PC-3 (cell line): ENCODE measurements at regions of chr1 and their contacts with region 1.

Region 1: DNA sequence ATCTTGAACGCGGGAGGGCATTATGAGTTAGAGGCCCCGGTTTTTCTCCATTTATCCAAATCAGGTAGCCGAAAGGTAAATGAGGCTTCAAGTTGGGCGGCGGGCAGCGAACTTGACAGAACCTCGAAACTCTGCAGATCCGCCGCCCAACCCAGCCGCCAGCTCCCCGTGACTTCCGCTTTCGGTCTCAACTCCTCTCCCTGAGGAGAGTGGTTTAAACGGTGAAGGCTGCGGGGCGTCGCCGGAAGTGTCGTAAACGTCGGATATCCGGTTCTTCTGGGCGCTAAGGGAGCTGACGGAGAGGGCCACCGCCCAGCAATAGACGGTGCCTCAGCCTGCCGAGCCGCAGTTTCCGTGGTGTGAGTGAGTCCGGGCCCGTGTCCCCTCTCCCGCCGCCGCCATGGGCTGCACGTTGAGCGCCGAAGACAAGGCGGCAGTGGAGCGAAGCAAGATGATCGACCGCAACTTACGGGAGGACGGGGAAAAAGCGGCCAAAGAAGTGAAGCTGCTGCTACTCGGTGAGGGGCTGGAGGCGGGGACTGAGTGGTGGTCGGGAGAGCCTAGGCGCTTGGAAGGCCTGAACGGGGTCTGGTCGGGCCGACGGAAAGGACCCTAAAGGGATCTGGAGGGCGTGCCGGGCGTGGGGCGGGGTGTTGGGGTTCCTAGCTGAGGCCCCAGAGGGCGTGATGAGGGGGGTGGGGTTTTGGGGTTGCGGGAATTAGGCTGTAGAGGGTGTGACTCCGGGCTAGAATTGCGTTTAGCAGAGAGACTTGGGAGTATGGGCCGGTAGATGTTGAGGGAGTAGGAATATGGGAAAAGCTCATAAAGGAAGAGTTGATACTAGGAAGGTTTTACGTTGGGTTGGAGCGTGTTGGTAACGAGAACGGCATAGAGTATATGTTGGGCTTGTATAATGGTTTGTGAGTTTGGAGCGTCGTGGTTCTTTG is at the start of gene GNAI3:
- DNase-seq: peak; percentile 97
- ATAC-seq: peak; percentile 92
- H3K4me3 ChIP-seq: peak within 1 kb of the TSS; percentile 93
- H3K27ac ChIP-seq: peak within 1 kb of the TSS; percentile 62
- H3K4me1 ChIP-seq: peaks cover 26% of the 10 kb centered on the region
- H3K27me3 ChIP-seq: no peaks in the 10 kb centered on the region
- CTCF ChIP-seq: no peak
- total RNA-seq, gene GNAI3: 6.7 and 6.8 TPM in 2 replicates

Region 2: DNA sequence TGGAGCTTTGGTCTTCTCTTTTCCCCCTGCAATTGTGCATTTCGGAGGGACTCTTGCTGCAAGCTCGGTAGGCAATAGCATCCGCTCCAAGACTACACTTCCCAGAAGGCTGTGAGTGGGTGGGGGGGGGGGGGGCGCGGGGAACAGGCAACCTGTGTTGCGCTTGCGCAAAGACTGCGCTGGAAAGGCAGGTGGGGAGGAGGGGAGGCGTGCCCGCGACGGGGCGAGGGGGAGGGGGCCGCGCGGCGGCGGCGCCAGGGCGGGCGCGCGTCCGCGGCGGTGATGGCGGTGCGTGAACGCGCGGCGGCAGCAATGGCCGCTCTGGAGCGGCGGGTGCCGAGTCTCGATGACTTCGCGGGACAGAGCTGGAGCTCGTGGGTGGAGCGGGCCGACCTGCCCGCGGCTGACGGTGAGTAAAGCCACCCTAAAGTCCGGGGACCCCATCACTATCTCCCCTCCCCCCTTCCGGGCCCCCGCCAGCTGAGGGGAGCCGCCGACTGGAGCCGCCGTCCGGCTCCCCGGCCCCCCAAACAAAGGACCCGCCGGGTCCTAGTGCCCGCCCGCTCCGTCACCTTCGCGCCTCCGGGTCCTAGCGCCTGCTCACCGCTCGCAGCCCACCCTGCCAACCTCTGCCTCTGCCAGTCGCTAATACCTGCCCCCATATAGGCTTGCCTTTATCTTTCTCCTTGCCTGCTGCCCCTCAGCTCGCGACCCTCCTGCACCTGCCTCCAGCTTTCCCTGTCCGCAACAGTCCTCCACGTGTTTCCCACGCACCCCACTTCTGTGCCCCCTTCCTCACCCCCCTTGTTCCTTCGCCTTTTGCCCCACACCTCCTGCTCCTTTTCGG is 64.7 kb before region 1 on chr1 and contains the start of gene ATXN7L2:
- CTCF ChIA-PET with region 1: no interaction called
- POLR2A ChIA-PET with region 1: no interaction called
- intact Hi-C with region 1: no loop called
- DNase-seq: peak; percentile 86
- ATAC-seq: peak; percentile 80
- H3K4me3 ChIP-seq: peak within 1 kb of the TSS; percentile 91
- H3K27ac ChIP-seq: peak within 1 kb of the TSS; percentile 51
- H3K4me1 ChIP-seq: peaks cover 17% of the 10 kb centered on the region
- H3K27me3 ChIP-seq: peaks cover 12% of the 10 kb centered on the region
- CTCF ChIP-seq: no peak
- total RNA-seq, gene ATXN7L2: 9.2 and 9.4 TPM in 2 replicates

Region 3: GRCh38 chr1:109567877-109568672 is 19.5 kb after region 1 on chr1:
- CTCF ChIA-PET with region 1: interaction called, 3 read pairs
- POLR2A ChIA-PET with region 1: interaction called, 6 read pairs
- intact Hi-C with region 1: loop called (anchors 2 kb)
- DNase-seq: no peak
- ATAC-seq: no peak
- H3K4me3 ChIP-seq: no peak overlapping the region
- H3K27ac ChIP-seq: no peak overlapping the region
- H3K4me1 ChIP-seq: peaks cover 30% of the 10 kb centered on the region
- H3K27me3 ChIP-seq: no peaks in the 10 kb centered on the region
- CTCF ChIP-seq: no peak

Region 4: DNA sequence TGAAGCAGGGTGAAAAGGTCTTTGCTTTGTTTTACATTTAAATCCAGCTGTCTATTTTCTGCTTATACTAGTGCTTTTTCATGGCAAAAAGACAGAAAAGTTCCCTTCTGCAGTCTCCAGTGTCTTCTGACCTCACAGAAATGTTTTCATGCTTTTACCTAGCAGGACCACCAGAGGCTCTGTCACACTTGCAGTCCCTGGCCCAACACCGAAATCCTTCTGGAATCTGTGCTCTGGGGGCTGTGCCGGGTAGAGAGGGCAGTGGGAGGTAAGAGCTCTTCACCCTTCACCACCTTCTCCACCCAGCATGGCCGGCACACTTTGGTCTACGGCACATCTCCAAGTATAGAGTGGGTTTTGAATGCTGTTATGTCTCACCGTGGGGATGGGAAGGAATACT is 50.1 kb after region 1 on chr1:
- CTCF ChIA-PET with region 1: no interaction called
- POLR2A ChIA-PET with region 1: no interaction called
- intact Hi-C with region 1: no loop called
- DNase-seq: no peak
- ATAC-seq: peak; percentile 20; the same call in 1 of the 2 replicates
- H3K4me3 ChIP-seq: no peak overlapping the region
- H3K27ac ChIP-seq: no peak overlapping the region
- H3K4me1 ChIP-seq: peaks cover 5% of the 10 kb centered on the region; the same call in 1 of the 2 replicates
- H3K27me3 ChIP-seq: no peaks in the 10 kb centered on the region
- CTCF ChIP-seq: peak; percentile 36; the same call in 1 of the 2 replicates

Region 5: GRCh38 chr1:109620841-109621286 is 72.3 kb after region 1 on chr1:
- CTCF ChIA-PET with region 1: interaction called, 4 read pairs
- POLR2A ChIA-PET with region 1: interaction called, 7 read pairs
- intact Hi-C with region 1: loop called (anchors 1 kb)
- DNase-seq: peak; percentile 92
- ATAC-seq: peak; percentile 87
- H3K4me3 ChIP-seq: peak overlapping the region; percentile 95
- H3K27ac ChIP-seq: peak overlapping the region; percentile 58
- H3K4me1 ChIP-seq: peaks cover 24% of the 10 kb centered on the region
- H3K27me3 ChIP-seq: no peaks in the 10 kb centered on the region
- CTCF ChIP-seq: no peak

Region 6: GRCh38 chr1:109643385-109644230 is 95.0 kb after region 1 on chr1:
- CTCF ChIA-PET with region 1: interaction called, 34 read pairs
- POLR2A ChIA-PET with region 1: no interaction called
- intact Hi-C with region 1: loop called (anchors 1 kb)
- DNase-seq: peak; percentile 86
- ATAC-seq: peak; percentile 97
- H3K4me3 ChIP-seq: peak overlapping the region; percentile 55; the same call in 1 of the 2 replicates
- H3K27ac ChIP-seq: no peak overlapping the region
- H3K4me1 ChIP-seq: peaks cover 5% of the 10 kb centered on the region; the same call in 1 of the 2 replicates
- H3K27me3 ChIP-seq: no peaks in the 10 kb centered on the region
- CTCF ChIP-seq: peak; percentile 92

Region 7: GRCh38 chr1:109649491-109649914 is 100.9 kb after region 1 on chr1:
- CTCF ChIA-PET with region 1: interaction called, 12 read pairs
- POLR2A ChIA-PET with region 1: interaction called, 4 read pairs
- intact Hi-C with region 1: loop called (anchors 1 kb)
- DNase-seq: peak; percentile 37
- ATAC-seq: peak; percentile 48
- H3K4me3 ChIP-seq: peak overlapping the region; percentile 66
- H3K27ac ChIP-seq: no peak overlapping the region
- H3K4me1 ChIP-seq: peaks cover 35% of the 10 kb centered on the region
- H3K27me3 ChIP-seq: no peaks in the 10 kb centered on the region
- CTCF ChIP-seq: peak; percentile 63

Region 8: GRCh38 chr1:109877320-109877771 is 328.8 kb after region 1 on chr1:
- CTCF ChIA-PET with region 1: no interaction called
- POLR2A ChIA-PET with region 1: no interaction called
- intact Hi-C with region 1: no loop called
- DNase-seq: no peak
- ATAC-seq: peak; percentile 46; the same call in 1 of the 2 replicates
- H3K4me3 ChIP-seq: no peak overlapping the region
- H3K27ac ChIP-seq: no peak overlapping the region
- H3K4me1 ChIP-seq: 0 out of 2 replicates have a peak, but pooled peaks cover 2% of the 10 kb centered on the region
- H3K27me3 ChIP-seq: no peaks in the 10 kb centered on the region
- CTCF ChIP-seq: no peak